ENCODE measurements at regions of chr11 and their contacts with region 1.

Region 1: DNA sequence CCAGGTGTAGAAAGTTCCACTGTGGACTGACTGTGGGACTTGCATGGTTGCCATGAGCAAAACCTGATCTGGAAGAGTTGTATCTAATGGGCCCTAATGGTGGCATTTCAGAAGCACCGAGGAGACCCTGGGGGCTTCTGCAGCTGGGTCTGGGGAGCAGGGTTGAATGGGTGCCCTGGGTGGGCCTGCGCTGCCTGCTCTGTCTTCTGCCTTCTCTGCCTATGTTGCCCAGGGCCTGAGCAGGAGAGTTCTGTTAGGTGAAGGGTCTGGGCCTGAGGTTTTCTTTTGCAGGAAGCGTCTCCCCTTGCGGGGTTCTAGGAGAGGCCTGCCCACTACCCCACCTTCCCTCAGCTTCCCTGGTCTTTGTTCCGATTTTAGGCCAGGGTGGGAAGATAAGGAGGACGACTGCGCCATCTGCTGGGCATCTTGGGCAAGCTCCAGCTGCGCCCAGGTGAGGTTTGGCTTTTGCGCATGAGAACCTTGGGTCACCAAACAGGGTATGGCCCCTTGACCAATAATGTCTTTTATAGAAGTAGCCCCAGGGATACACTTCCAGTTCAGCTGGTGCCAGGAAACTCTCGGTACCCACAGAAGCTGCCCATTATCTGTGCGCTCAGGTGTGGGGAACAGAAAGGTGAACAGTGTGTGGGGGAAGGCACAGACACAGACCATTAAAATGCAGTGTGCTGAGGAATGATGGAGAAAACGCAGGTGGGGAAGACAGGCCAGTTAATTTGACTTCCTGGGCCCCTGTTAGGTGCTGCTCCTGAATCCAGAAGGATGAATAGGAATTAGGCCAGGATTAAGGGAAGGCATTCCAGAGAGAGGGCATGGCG is 23.2 kb downstream of the COMMD9 start:
- DNase-seq: peak in 4 of 5 donors; percentile 30 to 46 (median 36)
- H3K4me3 ChIP-seq: no peak overlapping the region
- H3K4me3 Mint-ChIP-seq: no peak overlapping the region
- H3K27ac ChIP-seq: no peak overlapping the region
- H3K27ac Mint-ChIP-seq: no peak overlapping the region
- H3K4me1 ChIP-seq: no peaks in the 10 kb centered on the region
- H3K4me1 Mint-ChIP-seq: peaks cover 0 to 3% (median 0%) of the 10 kb centered on the region in 4 donors
- H3K27me3 ChIP-seq: no peaks in the 10 kb centered on the region
- H3K27me3 Mint-ChIP-seq: peaks cover 7 to 11% of the 10 kb centered on the region in 2 donors

Region 2: DNA sequence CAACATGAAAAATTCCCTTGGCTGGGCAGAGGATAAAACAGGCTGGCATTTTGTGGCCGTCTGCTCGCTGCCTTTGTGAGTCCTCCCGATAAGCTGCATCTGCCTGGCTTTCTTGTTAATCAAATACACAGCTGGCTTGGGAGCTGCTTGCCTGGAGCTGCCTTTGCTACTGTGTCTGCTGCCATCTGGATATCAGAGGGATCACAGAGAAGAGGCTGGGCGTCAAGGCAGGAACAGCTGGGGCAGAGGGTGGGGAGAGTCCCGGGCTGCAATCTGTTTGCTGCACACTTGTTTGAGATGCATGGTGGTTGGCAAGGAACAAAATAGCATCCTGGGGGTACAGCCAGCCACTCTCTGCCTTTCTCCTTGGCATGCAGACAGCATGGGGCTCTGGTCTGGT is 12.8 kb before region 1 on chr11:
- CTCF ChIA-PET with region 1: interaction called, 24 read pairs
- POLR2A ChIA-PET with region 1: no interaction called
- intact Hi-C with region 1: no loop called
- DNase-seq: no peak
- H3K4me3 ChIP-seq: no peak overlapping the region
- H3K4me3 Mint-ChIP-seq: no peak overlapping the region
- H3K27ac ChIP-seq: no peak overlapping the region
- H3K27ac Mint-ChIP-seq: no peak overlapping the region
- H3K4me1 ChIP-seq: no peaks in the 10 kb centered on the region
- H3K4me1 Mint-ChIP-seq: no peaks in the 10 kb centered on the region
- H3K27me3 ChIP-seq: no peaks in the 10 kb centered on the region
- H3K27me3 Mint-ChIP-seq: peaks cover 20 to 29% of the 10 kb centered on the region in 2 donors

Region 3: GRCh38 chr11:36278531-36279282 is 12.7 kb after region 1 on chr11:
- CTCF ChIA-PET with region 1: interaction called, 24 read pairs
- POLR2A ChIA-PET with region 1: no interaction called
- intact Hi-C with region 1: no loop called
- DNase-seq: no peak
- H3K4me3 ChIP-seq: no peak overlapping the region
- H3K4me3 Mint-ChIP-seq: no peak overlapping the region
- H3K27ac ChIP-seq: no peak overlapping the region
- H3K27ac Mint-ChIP-seq: peak overlapping the region in 1 of 7 donors; percentile 57
- H3K4me1 ChIP-seq: no peaks in the 10 kb centered on the region
- H3K4me1 Mint-ChIP-seq: peaks cover 5 to 19% (median 8%) of the 10 kb centered on the region in 4 donors
- H3K27me3 ChIP-seq: no peaks in the 10 kb centered on the region
- H3K27me3 Mint-ChIP-seq: no peaks in the 10 kb centered on the region

Region 4: GRCh38 chr11:36296895-36297604 is 31.0 kb after region 1 on chr11:
- CTCF ChIA-PET with region 1: no interaction called
- POLR2A ChIA-PET with region 1: no interaction called
- intact Hi-C with region 1: no loop called
- DNase-seq: no peak
- H3K4me3 ChIP-seq: no peak overlapping the region
- H3K4me3 Mint-ChIP-seq: no peak overlapping the region
- H3K27ac ChIP-seq: no peak overlapping the region
- H3K27ac Mint-ChIP-seq: no peak overlapping the region
- H3K4me1 ChIP-seq: no peaks in the 10 kb centered on the region
- H3K4me1 Mint-ChIP-seq: no peaks in the 10 kb centered on the region
- H3K27me3 ChIP-seq: no peaks in the 10 kb centered on the region
- H3K27me3 Mint-ChIP-seq: peaks cover 0 to 8% of the 10 kb centered on the region in 2 donors